Activated naive CD4-positive, alpha-beta T cell treated with anti-CD3 and anti-CD28 coated beads for 36 hours (primary cell): ENCODE measurements at regions of chr6 and their contacts with region 1.

Region 1: DNA sequence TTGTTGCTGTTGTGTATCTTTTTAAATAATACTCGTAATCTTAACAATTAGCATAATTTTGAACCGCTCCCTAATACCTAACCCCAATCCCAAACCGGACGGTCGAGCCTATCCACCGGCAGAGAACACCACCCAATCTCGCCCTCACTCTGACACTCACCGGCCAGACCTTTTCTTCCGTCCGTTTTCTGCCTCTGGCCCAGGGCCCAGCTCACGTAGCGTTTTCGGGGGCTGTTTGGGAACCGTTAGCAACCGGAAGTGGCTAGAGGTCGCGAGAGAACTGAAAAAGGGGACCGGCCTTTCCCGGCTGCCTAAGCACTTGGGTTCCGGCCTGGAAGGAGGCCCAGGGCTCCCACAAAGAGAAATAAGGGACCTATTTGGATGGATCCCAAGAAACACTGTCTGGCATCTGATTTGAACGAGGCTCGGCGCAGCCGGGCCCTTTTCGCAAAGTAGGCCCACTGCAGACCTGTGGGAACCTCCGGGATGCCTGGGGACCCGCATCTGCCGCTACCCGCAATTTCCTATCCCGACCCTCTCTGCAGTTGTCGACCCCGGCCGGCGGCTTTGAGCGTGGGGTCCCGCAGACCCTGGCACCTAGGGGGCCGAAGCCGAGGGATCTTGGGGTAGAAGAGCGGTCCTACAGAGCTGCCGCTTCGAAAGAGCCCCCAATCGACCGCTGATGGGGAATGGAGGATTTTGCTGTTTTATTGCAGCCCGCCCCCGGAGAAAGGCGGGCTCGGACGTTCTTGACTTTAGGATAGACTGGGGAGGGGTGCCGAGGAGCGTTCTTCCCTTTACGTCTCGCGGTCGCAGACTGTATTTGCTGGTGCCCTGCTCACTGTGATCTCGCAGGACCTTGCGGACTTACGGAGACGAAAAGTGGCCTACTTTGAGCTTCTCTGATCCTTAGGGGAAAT is 4.8 kb upstream of the ZKSCAN8 start:
- DNase-seq: peak; percentile 82
- H3K4me3 Mint-ChIP-seq: peak overlapping the region; percentile 97
- H3K27ac Mint-ChIP-seq: peak overlapping the region; percentile 99
- H3K4me1 Mint-ChIP-seq: peaks cover 63% of the 10 kb centered on the region
- H3K27me3 Mint-ChIP-seq: no peaks in the 10 kb centered on the region

Region 2: DNA sequence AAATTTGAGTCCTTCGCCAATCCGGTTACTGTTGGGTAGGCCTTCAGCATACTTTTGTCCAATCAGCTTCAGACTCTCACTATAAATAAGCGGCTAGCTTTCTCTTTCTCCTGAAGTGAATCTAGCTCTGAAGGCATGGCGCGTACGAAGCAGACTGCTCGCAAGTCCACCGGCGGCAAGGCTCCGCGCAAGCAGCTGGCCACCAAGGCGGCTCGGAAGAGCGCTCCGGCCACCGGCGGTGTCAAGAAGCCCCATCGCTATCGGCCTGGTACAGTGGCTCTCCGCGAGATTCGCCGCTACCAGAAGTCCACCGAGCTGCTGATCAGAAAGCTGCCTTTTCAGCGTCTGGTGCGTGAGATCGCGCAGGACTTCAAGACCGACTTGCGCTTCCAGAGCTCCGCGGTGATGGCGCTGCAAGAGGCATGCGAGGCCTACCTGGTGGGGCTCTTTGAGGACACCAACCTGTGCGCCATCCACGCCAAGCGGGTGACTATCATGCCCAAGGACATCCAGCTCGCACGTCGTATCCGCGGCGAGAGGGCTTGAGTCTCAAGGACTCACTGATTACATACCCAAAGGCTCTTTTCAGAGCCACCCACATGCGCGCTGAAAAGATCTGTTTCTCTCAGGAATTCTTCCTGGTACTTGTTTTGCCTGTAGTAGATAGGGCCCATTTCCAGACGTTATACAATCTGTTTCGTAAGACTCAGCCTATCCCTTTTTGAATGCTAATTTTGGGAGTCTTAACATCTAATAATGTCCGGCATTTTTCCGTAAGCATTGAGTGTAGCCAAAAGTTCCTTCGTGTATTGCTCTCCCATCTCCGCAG is 326.7 kb before region 1 on chr6:
- CTCF ChIA-PET with region 1: no interaction called
- intact Hi-C with region 1: loop called (anchors 5 kb)
- DNase-seq: peak; percentile 81
- H3K4me3 Mint-ChIP-seq: peak overlapping the region; percentile 93
- H3K27ac Mint-ChIP-seq: peak overlapping the region; percentile 95
- H3K4me1 Mint-ChIP-seq: peaks cover 41% of the 10 kb centered on the region
- H3K27me3 Mint-ChIP-seq: peaks cover 3% of the 10 kb centered on the region

Region 3: DNA sequence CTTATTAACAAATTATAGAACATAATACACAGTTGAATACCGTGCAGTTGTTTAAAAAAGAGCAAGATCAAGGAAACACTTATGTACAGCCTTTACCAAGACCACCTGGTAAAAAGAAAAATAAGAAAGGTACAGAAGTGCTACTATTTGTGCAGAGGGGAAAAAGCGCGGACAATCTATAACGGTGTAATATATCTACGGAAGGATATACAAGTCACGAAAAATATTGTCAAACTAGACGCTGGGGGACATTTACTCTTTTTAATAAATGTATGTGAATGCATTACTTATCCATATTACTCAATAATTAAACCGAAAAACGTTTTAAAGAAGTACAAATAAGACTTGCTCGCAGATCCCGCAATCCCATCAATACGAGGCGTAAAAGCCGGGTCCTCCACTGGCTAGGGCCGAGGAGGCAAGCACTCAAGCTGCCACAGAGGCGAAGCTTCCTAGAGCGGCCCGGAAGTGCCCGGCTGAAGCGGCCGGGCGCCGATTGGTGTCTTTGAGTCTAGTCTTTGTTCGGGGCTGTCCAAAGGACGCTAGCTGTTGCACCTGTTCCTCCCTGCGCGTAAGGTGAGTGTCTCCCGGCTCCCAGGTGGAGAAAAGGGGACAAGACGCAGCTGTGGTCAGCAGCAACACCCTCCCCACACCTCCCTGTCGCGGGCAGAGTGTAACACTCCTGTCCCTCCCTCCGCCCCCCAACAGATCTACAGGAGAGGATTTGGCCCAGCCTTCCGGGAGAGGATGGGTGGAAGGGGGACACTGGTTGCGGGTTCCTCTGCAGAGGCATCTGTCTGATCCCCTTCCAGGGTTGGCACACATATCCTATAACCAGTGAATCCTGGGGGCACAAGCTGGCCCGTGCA is 12.5 kb before region 1 on chr6 and contains the start of gene ZSCAN16:
- CTCF ChIA-PET with region 1: interaction called, 4 read pairs
- intact Hi-C with region 1: loop called (anchors 2 kb)
- DNase-seq: peak; percentile 78
- H3K4me3 Mint-ChIP-seq: peak within 1 kb of the TSS; percentile 94
- H3K27ac Mint-ChIP-seq: peak within 1 kb of the TSS; percentile 89
- H3K4me1 Mint-ChIP-seq: peaks cover 45% of the 10 kb centered on the region
- H3K27me3 Mint-ChIP-seq: no peaks in the 10 kb centered on the region
- total RNA-seq, gene ZSCAN16: 2.3 TPM

Region 4: GRCh38 chr6:28252009-28252975 is 115.4 kb after region 1 on chr6 and contains the start of gene ZKSCAN4:
- CTCF ChIA-PET with region 1: no interaction called
- intact Hi-C with region 1: loop called (anchors 1 kb)
- DNase-seq: peak; percentile 88
- H3K4me3 Mint-ChIP-seq: peak within 1 kb of the TSS; percentile 89
- H3K27ac Mint-ChIP-seq: peak within 1 kb of the TSS; percentile 83
- H3K4me1 Mint-ChIP-seq: peaks cover 23% of the 10 kb centered on the region
- H3K27me3 Mint-ChIP-seq: no peaks in the 10 kb centered on the region
- total RNA-seq, gene ZKSCAN4: 3.5 TPM

Region 5: DNA sequence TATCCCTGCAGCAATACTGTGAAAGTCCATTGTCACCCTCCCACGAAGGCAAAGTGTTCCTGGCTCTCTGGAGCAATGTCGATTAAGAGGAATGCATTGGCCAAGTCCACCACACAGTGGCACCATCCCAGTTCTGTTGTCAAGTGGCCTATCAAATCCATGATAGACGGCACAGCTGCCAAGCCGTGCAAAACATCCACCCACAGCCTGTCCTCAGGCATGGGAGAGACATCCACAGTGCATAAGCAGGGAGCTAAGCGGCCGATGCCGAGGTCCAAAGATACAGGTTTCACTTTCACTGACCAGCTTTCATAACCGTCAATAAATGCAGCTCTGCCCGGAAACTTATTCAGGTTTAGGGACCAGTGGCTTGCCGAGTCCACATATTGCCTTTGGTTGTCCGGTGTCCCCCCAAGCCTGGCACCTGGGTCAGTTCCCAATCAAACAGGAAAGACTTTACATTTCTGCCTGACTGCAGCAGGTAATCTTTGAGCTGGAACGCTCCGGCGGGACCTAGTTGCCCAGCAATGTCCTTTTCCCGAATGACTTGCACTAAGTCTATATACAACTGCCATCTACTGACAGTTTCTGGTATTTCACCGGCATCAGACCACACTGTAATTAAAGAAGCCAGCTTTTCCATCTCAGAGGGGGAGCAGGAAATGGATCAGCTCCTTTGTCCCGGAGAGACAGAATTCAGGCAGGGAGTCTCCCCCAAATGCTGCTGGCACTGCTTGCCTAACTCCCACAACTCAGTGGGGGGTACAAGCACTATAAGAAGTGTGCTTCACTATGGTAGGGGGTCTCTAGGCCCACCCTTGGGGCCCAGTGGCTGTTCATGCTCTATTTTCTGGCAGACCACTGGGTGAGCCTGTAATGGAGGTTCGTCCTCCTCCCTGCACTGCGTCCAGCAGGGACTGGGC is 219.2 kb after region 1 on chr6:
- CTCF ChIA-PET with region 1: interaction called, 27 read pairs
- intact Hi-C with region 1: loop called (anchors 1 kb)
- DNase-seq: peak; percentile 79
- H3K4me3 Mint-ChIP-seq: peak overlapping the region; percentile 80
- H3K27ac Mint-ChIP-seq: peak overlapping the region; percentile 75
- H3K4me1 Mint-ChIP-seq: peaks cover 23% of the 10 kb centered on the region
- H3K27me3 Mint-ChIP-seq: no peaks in the 10 kb centered on the region

Region 6: DNA sequence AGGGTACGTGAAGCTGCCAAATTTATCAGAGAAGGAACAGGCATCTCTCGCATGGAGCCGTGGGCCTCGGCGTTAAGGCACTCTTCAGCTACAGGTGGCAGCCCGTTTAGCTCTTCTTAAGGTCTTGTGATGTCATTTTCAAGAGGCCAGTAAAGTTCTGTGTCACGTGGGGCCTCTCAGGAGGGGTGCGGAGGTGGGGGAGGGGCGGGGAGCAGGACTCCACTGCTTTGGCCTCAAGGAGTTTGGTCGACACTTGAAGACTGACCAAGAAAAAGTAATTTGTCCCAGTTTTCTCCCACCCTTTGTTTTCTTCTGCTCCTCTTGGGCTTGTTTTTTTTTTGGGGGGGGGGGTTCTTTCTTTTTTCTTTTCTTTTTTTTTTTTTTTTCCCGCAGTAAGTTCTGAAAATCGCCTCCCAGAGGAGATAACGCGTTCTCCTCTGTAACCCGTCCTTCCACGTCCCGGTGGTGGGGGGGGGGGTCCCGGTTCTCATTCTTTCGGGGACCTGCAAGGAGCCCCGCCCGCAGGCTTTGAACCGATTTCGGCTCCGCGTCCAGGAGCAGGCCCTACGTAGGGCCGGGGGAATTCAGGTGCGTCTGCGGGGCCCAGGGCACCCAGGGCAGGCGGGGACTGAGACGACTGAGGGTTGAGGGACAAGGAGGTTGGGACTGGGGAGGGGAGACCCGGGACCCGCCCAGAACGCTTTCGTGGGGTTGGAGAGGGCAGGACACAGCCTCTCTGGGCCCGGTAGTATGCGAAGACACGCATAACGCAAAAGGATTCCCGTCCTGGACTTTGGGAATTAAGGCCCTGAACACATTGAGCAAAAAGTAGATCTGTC is 352.7 kb after region 1 on chr6:
- CTCF ChIA-PET with region 1: no interaction called
- intact Hi-C with region 1: loop called (anchors 5 kb)
- DNase-seq: peak; percentile 76
- H3K4me3 Mint-ChIP-seq: peak overlapping the region; percentile 81
- H3K27ac Mint-ChIP-seq: peak overlapping the region; percentile 79
- H3K4me1 Mint-ChIP-seq: peaks cover 23% of the 10 kb centered on the region
- H3K27me3 Mint-ChIP-seq: peaks cover 59% of the 10 kb centered on the region